Naive thymus-derived CD4-positive, alpha-beta T cell (primary cell): ENCODE measurements at regions of chr3 and their contacts with region 1.

Region 1: DNA sequence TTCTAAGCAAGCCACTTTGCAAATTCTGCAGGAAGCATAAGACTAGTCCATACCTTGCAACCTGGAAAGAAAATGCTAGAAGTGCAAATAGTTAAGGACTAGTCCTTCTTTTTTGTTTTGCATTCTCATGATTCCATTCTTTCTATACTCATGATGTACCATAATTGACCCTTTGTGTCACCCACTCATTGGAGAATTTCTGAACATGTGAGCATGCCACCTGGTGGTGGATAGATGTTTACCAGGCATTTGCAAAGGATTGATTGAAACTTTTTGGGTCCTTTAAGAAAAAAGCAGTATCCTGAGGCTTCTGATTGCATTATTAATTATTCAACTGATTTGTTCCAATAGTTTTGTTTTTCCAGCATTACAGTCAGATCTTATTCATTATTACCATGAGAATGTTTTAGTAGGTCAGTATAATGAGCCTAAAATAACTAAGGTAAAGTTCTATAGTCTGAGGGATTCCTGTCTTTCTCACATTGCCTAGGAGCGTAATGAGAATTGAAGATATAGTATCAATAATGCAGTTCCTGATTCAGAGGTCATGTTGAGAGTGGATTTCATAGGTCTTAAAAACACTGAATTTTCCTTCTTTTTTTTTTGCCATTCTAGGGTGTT is 20.2 kb upstream of the DIPK2A start:
- DNase-seq: peak in 6 of 9 donors; percentile 2 to 40 (median 30)
- ATAC-seq: peak; percentile 60
- H3K4me3 ChIP-seq: no peak overlapping the region
- H3K4me3 Mint-ChIP-seq: no peak overlapping the region
- H3K27ac ChIP-seq: no peak overlapping the region
- H3K27ac Mint-ChIP-seq: no peak overlapping the region
- H3K4me1 ChIP-seq: no peaks in the 10 kb centered on the region
- H3K4me1 Mint-ChIP-seq: peaks cover 0 to 4% (median 2%) of the 10 kb centered on the region in 7 donors
- H3K27me3 ChIP-seq: no peaks in the 10 kb centered on the region
- H3K27me3 Mint-ChIP-seq: peaks cover 5 to 38% (median 15%) of the 10 kb centered on the region in 5 donors

Region 2: DNA sequence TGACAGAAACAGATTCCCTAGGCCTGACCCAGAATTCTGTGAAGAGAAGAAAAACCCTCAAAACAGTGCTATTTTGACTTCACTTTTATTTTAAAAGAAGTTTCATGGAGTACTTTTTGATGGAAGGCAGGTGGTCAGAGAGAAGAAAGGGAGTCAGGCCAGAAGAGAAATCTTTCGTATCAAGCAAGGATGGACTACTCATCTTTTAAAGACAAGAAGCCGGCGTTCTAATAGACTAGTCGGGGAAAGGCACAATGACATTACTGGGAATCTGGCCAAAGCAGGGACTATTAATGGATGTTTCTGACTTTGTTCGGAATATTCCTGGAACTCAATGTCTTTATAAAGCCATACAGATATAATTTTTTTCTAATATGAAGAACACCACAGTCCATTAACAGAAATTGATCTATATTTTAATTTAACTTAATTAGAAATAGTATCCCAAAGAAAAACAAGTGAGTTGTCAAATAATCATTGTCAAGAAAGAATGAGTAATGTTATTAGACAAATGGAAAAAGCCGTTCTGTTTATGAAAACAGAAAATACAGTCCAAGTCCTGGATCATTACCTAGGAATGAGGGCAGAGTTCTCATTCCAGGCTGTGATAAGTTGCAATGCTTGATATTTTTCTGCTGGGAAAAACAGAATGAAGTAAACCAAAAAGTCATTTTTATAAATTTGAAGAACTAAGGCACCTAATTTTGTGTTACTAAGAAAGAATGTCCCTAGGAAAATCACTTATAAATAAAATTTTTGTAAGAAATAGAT is 1038.9 kb before region 1 on chr3:
- CTCF ChIA-PET with region 1: no interaction called
- POLR2A ChIA-PET with region 1: no interaction called
- intact Hi-C with region 1: no loop called
- DNase-seq: no peak
- ATAC-seq: no peak
- H3K4me3 ChIP-seq: no peak overlapping the region
- H3K4me3 Mint-ChIP-seq: no peak overlapping the region
- H3K27ac ChIP-seq: no peak overlapping the region
- H3K27ac Mint-ChIP-seq: no peak overlapping the region
- H3K4me1 ChIP-seq: no peaks in the 10 kb centered on the region
- H3K4me1 Mint-ChIP-seq: no peaks in the 10 kb centered on the region
- H3K27me3 ChIP-seq: no peaks in the 10 kb centered on the region
- H3K27me3 Mint-ChIP-seq: peaks cover 17 to 38% (median 21%) of the 10 kb centered on the region in 5 donors

Region 3: DNA sequence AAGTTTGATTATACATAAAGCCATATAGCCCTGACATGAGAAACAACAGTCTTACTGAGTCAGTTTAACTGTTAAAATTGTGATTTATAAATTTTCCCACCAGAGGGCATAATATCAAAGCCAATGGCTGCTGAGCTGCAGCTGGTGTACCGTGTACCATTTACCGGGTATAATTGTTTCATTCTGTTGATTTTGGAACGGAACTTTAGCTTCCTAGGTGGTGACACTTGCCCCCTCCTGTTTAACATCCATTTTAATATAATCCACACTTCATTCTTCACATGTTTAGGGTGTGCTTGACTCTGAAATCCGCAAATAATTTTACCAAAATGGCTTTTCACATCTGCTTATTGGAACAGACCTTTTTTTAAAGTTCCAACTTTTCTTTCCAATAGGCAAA is 176.0 kb before region 1 on chr3:
- CTCF ChIA-PET with region 1: interaction called, 6 read pairs
- POLR2A ChIA-PET with region 1: no interaction called
- intact Hi-C with region 1: loop called (anchors 1 kb)
- DNase-seq: peak in 6 of 9 donors; percentile 23 to 58 (median 46)
- ATAC-seq: peak; percentile 86
- H3K4me3 ChIP-seq: no peak overlapping the region
- H3K4me3 Mint-ChIP-seq: peak overlapping the region in 1 of 10 donors; percentile 38
- H3K27ac ChIP-seq: no peak overlapping the region
- H3K27ac Mint-ChIP-seq: no peak overlapping the region
- H3K4me1 ChIP-seq: no peaks in the 10 kb centered on the region
- H3K4me1 Mint-ChIP-seq: peaks cover 0 to 6% (median 3%) of the 10 kb centered on the region in 7 donors
- H3K27me3 ChIP-seq: no peaks in the 10 kb centered on the region
- H3K27me3 Mint-ChIP-seq: no peaks in the 10 kb centered on the region

Region 4: DNA sequence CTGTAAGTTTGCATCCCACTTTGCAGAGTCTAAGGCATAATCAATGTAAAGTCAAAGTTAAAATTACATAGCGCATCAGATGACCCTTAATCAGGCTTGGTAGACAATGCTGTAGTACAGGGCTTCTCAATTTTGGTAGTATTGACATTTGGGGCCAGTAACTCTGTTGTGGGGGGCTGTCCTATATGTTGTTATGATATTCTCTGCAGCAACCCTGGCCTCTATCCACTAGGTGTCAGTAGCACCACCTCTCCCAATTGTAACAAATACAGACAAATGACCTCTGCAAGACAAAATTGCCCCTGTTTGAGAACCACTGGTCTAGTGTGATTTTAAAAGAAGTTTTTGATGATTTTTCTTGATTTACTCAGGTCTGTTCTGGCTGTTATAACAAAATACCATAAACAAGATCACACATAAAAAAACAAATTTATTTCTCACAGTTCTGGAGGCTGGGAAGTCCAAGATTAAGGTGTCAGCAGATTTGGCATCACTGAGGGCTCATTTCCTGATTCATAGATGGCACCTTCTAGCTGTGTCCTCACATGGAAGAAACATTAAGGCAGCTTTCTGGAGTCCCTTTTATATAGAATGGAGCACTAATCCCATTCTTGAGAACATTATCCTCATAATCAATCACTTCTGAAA is 65.6 kb before region 1 on chr3:
- CTCF ChIA-PET with region 1: interaction called, 6 read pairs
- POLR2A ChIA-PET with region 1: no interaction called
- intact Hi-C with region 1: loop called (anchors 1 to 2 kb)
- DNase-seq: peak in 5 of 9 donors; percentile 12 to 30 (median 29)
- ATAC-seq: peak; percentile 85
- H3K4me3 ChIP-seq: no peak overlapping the region
- H3K4me3 Mint-ChIP-seq: no peak overlapping the region
- H3K27ac ChIP-seq: no peak overlapping the region
- H3K27ac Mint-ChIP-seq: no peak overlapping the region
- H3K4me1 ChIP-seq: no peaks in the 10 kb centered on the region
- H3K4me1 Mint-ChIP-seq: no peaks in the 10 kb centered on the region
- H3K27me3 ChIP-seq: no peaks in the 10 kb centered on the region
- H3K27me3 Mint-ChIP-seq: peaks cover 0 to 20% (median 0%) of the 10 kb centered on the region in 5 donors

Region 5: DNA sequence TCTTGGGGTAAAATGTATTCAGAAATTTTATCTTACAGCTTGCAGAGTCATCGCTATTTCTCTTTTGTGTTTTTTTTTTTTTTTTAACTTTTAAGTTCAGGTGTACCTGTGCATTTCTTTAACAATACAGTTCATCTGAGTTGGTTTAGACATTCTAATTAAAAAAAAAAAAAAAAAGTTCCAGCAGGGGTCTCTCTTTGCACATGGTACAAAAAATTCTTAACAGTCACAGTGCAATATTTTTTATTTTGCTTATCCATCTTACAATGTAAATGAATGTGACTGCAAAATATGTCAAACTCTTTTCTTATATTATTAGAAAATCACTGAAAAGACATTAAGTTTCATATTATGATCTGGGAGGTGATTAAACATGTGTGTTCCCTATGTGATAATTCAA is 55.7 kb before region 1 on chr3:
- CTCF ChIA-PET with region 1: no interaction called
- POLR2A ChIA-PET with region 1: no interaction called
- intact Hi-C with region 1: loop called in 1 of 2 experiments (anchors 2 kb)
- DNase-seq: no peak
- ATAC-seq: no peak
- H3K4me3 ChIP-seq: no peak overlapping the region
- H3K4me3 Mint-ChIP-seq: no peak overlapping the region
- H3K27ac ChIP-seq: no peak overlapping the region
- H3K27ac Mint-ChIP-seq: no peak overlapping the region
- H3K4me1 ChIP-seq: no peaks in the 10 kb centered on the region
- H3K4me1 Mint-ChIP-seq: no peaks in the 10 kb centered on the region
- H3K27me3 ChIP-seq: peaks cover 0 to 3% of the 10 kb centered on the region in 2 donors
- H3K27me3 Mint-ChIP-seq: peaks cover 8 to 23% (median 17%) of the 10 kb centered on the region in 5 donors

Region 6: DNA sequence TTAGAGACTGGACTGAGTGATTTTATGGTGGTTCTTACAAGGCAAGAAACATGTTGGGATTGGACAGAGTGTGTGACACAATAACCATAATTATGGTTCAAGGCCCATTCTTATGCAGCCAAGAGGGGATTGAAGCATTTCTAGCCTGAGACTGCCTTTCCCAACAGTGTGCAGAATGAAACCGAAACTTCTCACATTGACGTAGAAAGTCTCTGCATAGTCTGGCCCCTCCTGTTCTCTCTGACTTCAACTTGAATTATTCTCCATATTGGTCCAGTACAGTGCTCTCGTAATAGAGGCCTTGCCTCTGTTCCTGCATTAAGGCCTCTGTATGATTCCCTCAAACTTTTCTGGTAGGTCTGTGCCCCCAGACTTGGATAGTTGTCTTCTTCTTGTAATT is 158.5 kb after region 1 on chr3:
- CTCF ChIA-PET with region 1: no interaction called
- POLR2A ChIA-PET with region 1: no interaction called
- intact Hi-C with region 1: no loop called
- DNase-seq: no peak
- ATAC-seq: peak; percentile 58
- H3K4me3 ChIP-seq: no peak overlapping the region
- H3K4me3 Mint-ChIP-seq: peak overlapping the region in 1 of 10 donors; percentile 33
- H3K27ac ChIP-seq: no peak overlapping the region
- H3K27ac Mint-ChIP-seq: peak overlapping the region in 1 of 9 donors; percentile 7
- H3K4me1 ChIP-seq: no peaks in the 10 kb centered on the region
- H3K4me1 Mint-ChIP-seq: peaks cover 0 to 3% (median 0%) of the 10 kb centered on the region in 7 donors
- H3K27me3 ChIP-seq: no peaks in the 10 kb centered on the region
- H3K27me3 Mint-ChIP-seq: peaks cover 4 to 23% (median 13%) of the 10 kb centered on the region in 5 donors

Region 7: GRCh38 chr3:144259267-144259666 is 307.8 kb after region 1 on chr3:
- CTCF ChIA-PET with region 1: no interaction called
- POLR2A ChIA-PET with region 1: no interaction called
- intact Hi-C with region 1: no loop called
- DNase-seq: no peak
- ATAC-seq: no peak
- H3K4me3 ChIP-seq: no peak overlapping the region
- H3K4me3 Mint-ChIP-seq: no peak overlapping the region
- H3K27ac ChIP-seq: no peak overlapping the region
- H3K27ac Mint-ChIP-seq: no peak overlapping the region
- H3K4me1 ChIP-seq: no peaks in the 10 kb centered on the region
- H3K4me1 Mint-ChIP-seq: peaks cover 0 to 2% (median 0%) of the 10 kb centered on the region in 7 donors
- H3K27me3 ChIP-seq: no peaks in the 10 kb centered on the region
- H3K27me3 Mint-ChIP-seq: peaks cover 2 to 24% (median 18%) of the 10 kb centered on the region in 5 donors

Region 8: DNA sequence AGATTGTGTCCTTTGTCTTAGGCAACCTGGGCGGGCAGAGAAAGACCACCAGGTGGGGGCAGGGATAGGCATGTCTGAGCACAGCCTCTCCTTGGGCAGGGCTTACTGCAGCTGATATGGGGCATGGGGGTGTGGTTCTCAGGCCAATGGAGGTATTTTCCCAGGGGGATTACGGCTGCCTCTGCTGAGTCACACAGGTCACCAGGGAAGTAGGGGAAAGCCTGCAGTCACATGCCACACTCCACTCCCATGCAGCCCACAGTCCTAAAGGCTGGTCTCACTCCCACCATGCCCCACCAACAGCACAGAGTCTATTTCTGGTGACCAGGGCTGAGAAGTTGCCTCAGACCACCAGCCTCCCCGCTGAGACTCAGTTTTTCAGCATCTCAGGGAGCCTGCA is 486.5 kb after region 1 on chr3:
- CTCF ChIA-PET with region 1: no interaction called
- POLR2A ChIA-PET with region 1: no interaction called
- intact Hi-C with region 1: no loop called
- DNase-seq: peak in 1 of 9 donors; percentile 6
- ATAC-seq: no peak
- H3K4me3 ChIP-seq: no peak overlapping the region
- H3K4me3 Mint-ChIP-seq: no peak overlapping the region
- H3K27ac ChIP-seq: no peak overlapping the region
- H3K27ac Mint-ChIP-seq: no peak overlapping the region
- H3K4me1 ChIP-seq: no peaks in the 10 kb centered on the region
- H3K4me1 Mint-ChIP-seq: no peaks in the 10 kb centered on the region
- H3K27me3 ChIP-seq: no peaks in the 10 kb centered on the region
- H3K27me3 Mint-ChIP-seq: peaks cover 0 to 4% (median 0%) of the 10 kb centered on the region in 5 donors